Right lobe of liver (tissue), 6 donors: ENCODE measurements at regions of chr7 and their contacts with region 1.

Region 1: GRCh38 chr7:141975806-141976523 is 2.4 kb upstream of the TAS2R38 start:
- DNase-seq: peak; percentile 80 to 84 (median 83)
- ATAC-seq: peak; percentile 96 to 98 (median 96)
- H3K4me3 ChIP-seq: peak overlapping the region; percentile 25 to 40 (median 33)
- H3K27ac ChIP-seq: no peak overlapping the region
- H3K4me1 ChIP-seq: peaks cover 0 to 7% (median 0%) of the 10 kb centered on the region in 4 donors
- H3K27me3 ChIP-seq: no peaks in the 10 kb centered on the region
- CTCF ChIP-seq: peak; percentile 84 to 92 (median 88)
- POLR2A ChIP-seq: no peak

Region 2: DNA sequence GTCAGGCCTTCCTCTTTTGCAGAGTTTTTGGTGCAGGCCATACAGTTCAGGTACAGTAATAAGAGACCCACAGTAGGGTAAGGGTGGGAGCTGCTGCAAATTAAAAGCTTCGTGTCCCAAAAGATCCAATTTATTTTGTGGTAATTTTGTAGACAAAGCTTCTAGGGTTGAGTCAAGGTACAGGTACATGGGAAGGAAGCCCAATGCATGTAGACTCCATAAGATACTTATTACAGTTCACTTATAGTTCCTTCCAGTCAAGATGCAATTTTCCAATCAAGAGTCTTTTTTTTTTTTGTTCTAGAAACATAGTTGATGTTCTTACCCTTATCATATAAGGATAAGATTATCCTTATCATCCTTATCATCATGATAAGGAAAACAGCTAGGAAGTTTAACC is 199.6 kb before region 1 on chr7 and contains the start of gene TAS2R4:
- intact Hi-C with region 1: no loop called
- DNase-seq: no peak
- ATAC-seq: no peak
- H3K4me3 ChIP-seq: no peak within 1 kb of the TSS
- H3K27ac ChIP-seq: no peak within 1 kb of the TSS
- H3K4me1 ChIP-seq: no peaks in the 10 kb centered on the region
- H3K27me3 ChIP-seq: no peaks in the 10 kb centered on the region
- CTCF ChIP-seq: no peak
- POLR2A ChIP-seq: no peak
- total RNA-seq, gene TAS2R4: 0.32 to 0.74 (median 0.52) TPM

Region 3: DNA sequence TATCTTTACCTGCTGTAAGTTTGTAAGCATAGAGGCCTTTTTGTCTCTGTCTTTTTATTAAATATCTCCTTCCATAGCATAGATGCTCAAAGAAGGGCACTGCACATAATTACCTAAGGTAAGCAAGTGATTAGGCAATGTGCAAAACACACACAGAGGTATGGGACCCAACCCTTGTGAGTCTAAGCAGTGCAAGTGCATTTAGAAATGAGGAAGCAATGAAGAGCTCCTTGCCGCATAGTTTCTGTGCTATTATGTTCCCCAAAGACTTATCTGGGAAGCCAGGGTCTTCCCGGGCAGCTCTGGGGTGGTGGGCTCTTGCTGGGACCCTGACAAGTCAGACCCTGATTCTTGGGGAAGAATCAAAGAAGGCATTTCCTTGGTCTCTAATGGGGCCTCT is 122.0 kb after region 1 on chr7:
- intact Hi-C with region 1: loop called in 1 of 2 experiments (anchors 10 kb)
- DNase-seq: no peak
- ATAC-seq: no peak
- H3K4me3 ChIP-seq: no peak overlapping the region
- H3K27ac ChIP-seq: no peak overlapping the region
- H3K4me1 ChIP-seq: no peaks in the 10 kb centered on the region
- H3K27me3 ChIP-seq: no peaks in the 10 kb centered on the region
- CTCF ChIP-seq: no peak
- POLR2A ChIP-seq: no peak

Region 4: DNA sequence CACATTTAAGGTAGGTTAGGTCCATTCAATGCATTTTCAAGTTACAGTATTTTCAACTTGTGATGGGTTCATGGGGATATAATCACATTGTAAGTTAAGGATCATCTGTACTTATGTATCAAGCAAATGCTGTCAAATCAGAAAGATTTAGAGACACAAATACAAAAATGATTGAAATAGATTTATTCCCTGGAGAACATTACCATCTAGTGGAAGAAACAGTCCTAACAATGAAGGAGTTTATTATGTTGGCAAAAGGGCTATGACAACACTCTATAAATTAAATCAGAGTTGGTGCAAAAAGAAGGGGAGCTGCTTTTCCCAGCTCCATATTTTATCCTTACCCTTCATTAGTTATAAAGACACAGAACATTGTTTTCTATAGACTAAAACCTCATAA is 212.9 kb after region 1 on chr7:
- intact Hi-C with region 1: loop called (anchors 5 kb)
- DNase-seq: no peak
- ATAC-seq: peak; percentile 42 to 65 (median 58)
- H3K4me3 ChIP-seq: no peak overlapping the region
- H3K27ac ChIP-seq: no peak overlapping the region
- H3K4me1 ChIP-seq: no peaks in the 10 kb centered on the region
- H3K27me3 ChIP-seq: no peaks in the 10 kb centered on the region
- CTCF ChIP-seq: peak; percentile 44 to 67 (median 58)
- POLR2A ChIP-seq: no peak

Region 5: DNA sequence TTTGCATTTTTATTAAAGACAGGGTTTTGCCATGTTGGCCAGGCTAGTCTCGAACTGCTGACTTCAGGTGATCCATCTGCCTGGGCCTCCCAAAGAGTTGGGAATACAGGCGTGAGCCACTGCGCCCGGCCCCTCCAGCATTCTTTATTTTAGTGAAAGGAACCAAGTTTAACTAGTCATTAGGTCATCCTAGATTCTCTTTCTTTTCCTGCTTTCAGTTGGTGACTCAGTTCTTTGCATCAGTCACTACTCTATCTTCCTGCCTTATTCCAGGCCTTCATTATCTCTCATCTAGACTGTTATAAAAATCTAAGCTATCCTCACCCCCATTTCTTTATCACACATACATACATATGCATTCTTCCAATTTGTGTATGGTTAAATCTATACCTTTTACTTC is 218.2 kb after region 1 on chr7:
- intact Hi-C with region 1: loop called (anchors 5 kb)
- DNase-seq: no peak
- ATAC-seq: peak in 1 of 4 donors; percentile 55
- H3K4me3 ChIP-seq: no peak overlapping the region
- H3K27ac ChIP-seq: no peak overlapping the region
- H3K4me1 ChIP-seq: no peaks in the 10 kb centered on the region
- H3K27me3 ChIP-seq: no peaks in the 10 kb centered on the region
- CTCF ChIP-seq: no peak
- POLR2A ChIP-seq: no peak